ENCODE measurements at regions of chr5 and their contacts with region 1.

Region 1: DNA sequence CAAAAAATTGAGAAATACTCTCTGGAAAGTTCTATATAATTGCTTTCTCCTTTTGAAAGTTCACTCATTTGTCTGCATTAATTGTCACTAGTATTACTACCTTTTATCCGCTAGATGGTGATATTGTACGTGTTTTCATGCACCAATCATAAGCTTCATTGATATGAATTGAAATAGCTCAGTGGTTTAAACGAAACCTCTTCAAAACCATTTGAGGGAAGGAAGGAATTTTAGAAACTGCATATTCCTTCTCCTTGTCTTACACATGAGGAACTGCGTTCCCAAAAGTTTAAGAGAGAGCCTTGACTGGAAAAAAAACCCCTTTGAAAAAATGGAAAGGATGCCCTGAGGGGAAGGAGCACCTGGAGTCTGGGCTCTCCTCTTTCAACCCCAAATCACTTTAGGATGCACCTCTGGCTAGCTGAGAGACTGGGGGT is 98.6 kb downstream of the YTHDC2 start:
- DNase-seq: peak in 6 of 9 donors; percentile 14 to 49 (median 38)
- ATAC-seq: peak; percentile 72
- H3K4me3 ChIP-seq: no peak overlapping the region
- H3K4me3 Mint-ChIP-seq: no peak overlapping the region
- H3K27ac ChIP-seq: no peak overlapping the region
- H3K27ac Mint-ChIP-seq: no peak overlapping the region
- H3K4me1 ChIP-seq: no peaks in the 10 kb centered on the region
- H3K4me1 Mint-ChIP-seq: peaks cover 0 to 7% (median 3%) of the 10 kb centered on the region in 7 donors
- H3K27me3 ChIP-seq: no peaks in the 10 kb centered on the region
- H3K27me3 Mint-ChIP-seq: peaks cover 11 to 26% (median 19%) of the 10 kb centered on the region in 5 donors

Region 2: DNA sequence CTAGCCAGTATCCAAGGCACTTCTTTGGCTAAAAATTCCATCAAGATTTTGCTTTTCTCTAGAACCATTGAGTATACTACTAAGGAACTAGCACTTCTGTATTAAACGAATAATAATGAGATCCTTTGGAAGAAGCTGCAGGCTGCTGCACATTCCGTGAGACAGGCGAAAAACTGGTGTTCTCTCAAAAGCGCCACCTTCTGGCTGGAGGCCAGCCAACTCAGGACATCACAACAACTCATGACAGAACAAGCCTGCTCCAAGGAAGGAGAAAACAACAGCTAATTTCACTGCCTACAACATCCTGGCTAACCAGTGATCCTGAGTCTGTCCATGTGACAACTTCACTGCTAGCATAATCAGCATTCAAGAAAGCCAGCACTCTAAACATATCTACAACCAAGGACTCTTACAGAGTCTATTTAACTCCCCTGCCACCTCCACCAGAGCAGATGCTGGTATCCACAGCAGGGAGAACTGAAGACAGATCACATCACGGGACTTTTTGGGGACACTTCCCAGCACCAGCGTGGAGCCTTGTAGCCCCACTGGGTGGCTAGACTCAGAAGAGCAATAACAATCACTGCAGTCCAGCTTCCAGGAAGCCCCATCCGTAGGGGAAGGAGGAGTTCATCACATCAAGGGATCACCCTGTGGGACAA is 51.9 kb after region 1 on chr5:
- CTCF ChIA-PET with region 1: interaction called, 6 read pairs
- POLR2A ChIA-PET with region 1: no interaction called
- intact Hi-C with region 1: loop called (anchors 1 kb)
- DNase-seq: peak in 5 of 9 donors; percentile 5 to 24 (median 9)
- ATAC-seq: no peak
- H3K4me3 ChIP-seq: no peak overlapping the region
- H3K4me3 Mint-ChIP-seq: no peak overlapping the region
- H3K27ac ChIP-seq: no peak overlapping the region
- H3K27ac Mint-ChIP-seq: no peak overlapping the region
- H3K4me1 ChIP-seq: no peaks in the 10 kb centered on the region
- H3K4me1 Mint-ChIP-seq: no peaks in the 10 kb centered on the region
- H3K27me3 ChIP-seq: no peaks in the 10 kb centered on the region
- H3K27me3 Mint-ChIP-seq: peaks cover 8 to 52% (median 28%) of the 10 kb centered on the region in 5 donors

Region 3: DNA sequence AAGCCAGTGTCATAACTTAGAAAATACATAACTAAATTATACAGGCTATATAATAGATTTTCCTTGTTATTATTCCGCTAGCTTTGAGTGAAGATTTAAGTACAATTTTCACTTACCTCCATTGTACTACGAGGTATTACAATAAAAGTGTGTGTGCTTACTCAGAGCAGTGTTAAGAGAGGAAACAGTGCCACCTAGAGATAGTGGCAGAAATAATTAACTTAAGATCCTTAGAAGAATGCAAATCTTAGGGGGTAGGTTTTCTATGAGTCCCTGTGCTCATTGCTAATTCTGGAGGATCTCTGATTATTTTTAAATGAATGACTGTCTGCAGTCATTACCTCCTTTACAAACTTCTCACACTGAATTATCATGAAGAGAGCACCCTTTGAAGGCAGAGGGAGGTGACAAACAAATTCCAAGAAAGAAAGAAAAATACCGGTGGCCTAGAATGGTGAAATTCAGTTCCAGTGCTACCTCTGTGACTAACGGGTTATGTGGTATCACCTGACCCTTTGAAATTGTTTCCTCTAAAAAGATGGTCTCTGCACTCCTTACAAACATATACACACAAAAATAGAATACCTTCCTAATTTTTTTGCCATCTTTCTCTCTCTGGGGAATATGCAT is 1177.8 kb after region 1 on chr5:
- CTCF ChIA-PET with region 1: no interaction called
- POLR2A ChIA-PET with region 1: no interaction called
- intact Hi-C with region 1: loop called in 1 of 2 experiments (anchors 5 kb)
- DNase-seq: no peak
- ATAC-seq: no peak
- H3K4me3 ChIP-seq: no peak overlapping the region
- H3K4me3 Mint-ChIP-seq: no peak overlapping the region
- H3K27ac ChIP-seq: no peak overlapping the region
- H3K27ac Mint-ChIP-seq: no peak overlapping the region
- H3K4me1 ChIP-seq: no peaks in the 10 kb centered on the region
- H3K4me1 Mint-ChIP-seq: no peaks in the 10 kb centered on the region
- H3K27me3 ChIP-seq: no peaks in the 10 kb centered on the region
- H3K27me3 Mint-ChIP-seq: peaks cover 0 to 7% (median 0%) of the 10 kb centered on the region in 5 donors

Region 4: DNA sequence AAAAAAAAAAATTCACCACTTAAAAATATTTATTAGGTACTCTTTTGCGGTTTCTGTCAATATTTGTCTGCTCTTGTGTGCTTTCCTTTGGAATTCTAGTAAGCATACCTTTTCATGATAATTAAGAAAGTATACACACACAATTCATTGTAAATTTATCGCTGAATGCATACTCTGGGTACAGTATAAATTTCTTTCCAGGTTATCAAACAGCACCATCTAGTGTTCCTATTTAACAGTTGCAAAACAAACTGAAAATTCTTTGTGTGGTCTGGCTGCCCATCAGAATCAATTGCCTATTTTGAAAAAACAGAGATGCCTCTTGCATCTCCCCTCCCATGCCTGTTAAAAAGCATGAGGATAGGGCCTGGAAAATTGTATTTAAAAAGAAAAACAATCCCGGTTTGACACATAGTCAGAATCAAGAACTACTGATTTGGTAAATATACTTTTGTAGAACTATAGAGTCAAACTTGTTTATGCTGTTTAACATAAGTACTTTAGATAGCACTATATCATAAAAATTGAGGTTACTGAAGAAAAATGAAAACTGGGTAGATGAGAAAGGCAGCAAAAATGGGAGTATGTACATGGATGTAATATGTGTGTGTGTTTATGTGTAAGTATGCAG is 1634.4 kb after region 1 on chr5:
- CTCF ChIA-PET with region 1: interaction called, 6 read pairs
- POLR2A ChIA-PET with region 1: no interaction called
- intact Hi-C with region 1: loop called in 1 of 2 experiments (anchors 5 kb)
- DNase-seq: peak in 6 of 9 donors; percentile 8 to 36 (median 18)
- ATAC-seq: peak; percentile 77
- H3K4me3 ChIP-seq: no peak overlapping the region
- H3K4me3 Mint-ChIP-seq: no peak overlapping the region
- H3K27ac ChIP-seq: no peak overlapping the region
- H3K27ac Mint-ChIP-seq: peak overlapping the region in 1 of 9 donors; percentile 1
- H3K4me1 ChIP-seq: no peaks in the 10 kb centered on the region
- H3K4me1 Mint-ChIP-seq: peaks cover 7 to 38% (median 20%) of the 10 kb centered on the region in 7 donors
- H3K27me3 ChIP-seq: no peaks in the 10 kb centered on the region
- H3K27me3 Mint-ChIP-seq: no peaks in the 10 kb centered on the region

Region 5: DNA sequence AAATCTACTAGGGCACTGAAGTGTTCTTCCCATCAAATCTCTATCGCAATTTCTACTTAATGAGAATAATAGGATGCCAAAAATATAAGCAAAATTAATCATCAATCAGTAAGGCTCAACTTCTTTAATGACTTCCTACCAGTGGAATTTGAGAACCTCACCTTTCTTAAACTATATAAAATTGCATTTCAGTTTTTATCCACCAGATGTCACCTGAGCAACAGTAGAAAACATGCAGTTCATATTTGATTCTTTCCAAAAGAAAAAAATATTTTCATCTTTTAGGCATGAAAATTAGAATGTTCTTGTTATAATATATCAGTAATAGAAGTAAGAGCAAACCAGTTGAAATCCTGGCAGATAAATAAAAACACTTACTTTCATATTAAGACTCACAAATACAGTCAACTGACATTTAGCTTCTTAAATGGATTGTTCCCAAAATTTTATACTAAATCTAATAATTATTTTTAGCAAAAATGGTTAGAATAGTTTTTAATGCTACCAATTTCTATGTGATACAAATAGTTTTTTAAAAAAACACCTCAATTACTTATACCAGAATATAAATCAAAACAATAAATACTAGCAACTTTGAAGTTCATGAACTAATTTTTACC is 1697.8 kb after region 1 on chr5:
- CTCF ChIA-PET with region 1: no interaction called
- POLR2A ChIA-PET with region 1: no interaction called
- intact Hi-C with region 1: loop called in 1 of 2 experiments (anchors 5 kb)
- DNase-seq: peak in 6 of 9 donors; percentile 10 to 56 (median 46)
- ATAC-seq: peak; percentile 76
- H3K4me3 ChIP-seq: no peak overlapping the region
- H3K4me3 Mint-ChIP-seq: no peak overlapping the region
- H3K27ac ChIP-seq: no peak overlapping the region
- H3K27ac Mint-ChIP-seq: no peak overlapping the region
- H3K4me1 ChIP-seq: no peaks in the 10 kb centered on the region
- H3K4me1 Mint-ChIP-seq: no peaks in the 10 kb centered on the region
- H3K27me3 ChIP-seq: no peaks in the 10 kb centered on the region
- H3K27me3 Mint-ChIP-seq: peaks cover 19 to 47% (median 27%) of the 10 kb centered on the region in 5 donors

Region 6: GRCh38 chr5:115586601-115587048 is 1974.5 kb after region 1 on chr5:
- CTCF ChIA-PET with region 1: no interaction called
- POLR2A ChIA-PET with region 1: no interaction called
- intact Hi-C with region 1: loop called (anchors 1 to 5 kb)
- DNase-seq: peak in 6 of 9 donors; percentile 13 to 38 (median 27)
- ATAC-seq: peak; percentile 56
- H3K4me3 ChIP-seq: no peak overlapping the region
- H3K4me3 Mint-ChIP-seq: no peak overlapping the region
- H3K27ac ChIP-seq: no peak overlapping the region
- H3K27ac Mint-ChIP-seq: no peak overlapping the region
- H3K4me1 ChIP-seq: no peaks in the 10 kb centered on the region
- H3K4me1 Mint-ChIP-seq: no peaks in the 10 kb centered on the region
- H3K27me3 ChIP-seq: no peaks in the 10 kb centered on the region
- H3K27me3 Mint-ChIP-seq: peaks cover 0 to 5% (median 0%) of the 10 kb centered on the region in 5 donors

Measured in naive thymus-derived CD4-positive, alpha-beta T cell (primary cell).